ENCODE measurements at regions of chr5 and their contacts with region 1.

Region 1: GRCh38 chr5:170434966-170435605 is 45.9 kb upstream of the KCNMB1 start:
- DNase-seq: peak; percentile 51 to 85 (median 68)
- H3K4me3 ChIP-seq: no peak overlapping the region
- H3K27ac ChIP-seq: no peak overlapping the region
- H3K4me1 ChIP-seq: no peaks in the 10 kb centered on the region
- H3K27me3 ChIP-seq: no peaks in the 10 kb centered on the region
- CTCF ChIP-seq: peak; percentile 85 to 99 (median 97)
- POLR2A ChIP-seq: no peak

Region 2: DNA sequence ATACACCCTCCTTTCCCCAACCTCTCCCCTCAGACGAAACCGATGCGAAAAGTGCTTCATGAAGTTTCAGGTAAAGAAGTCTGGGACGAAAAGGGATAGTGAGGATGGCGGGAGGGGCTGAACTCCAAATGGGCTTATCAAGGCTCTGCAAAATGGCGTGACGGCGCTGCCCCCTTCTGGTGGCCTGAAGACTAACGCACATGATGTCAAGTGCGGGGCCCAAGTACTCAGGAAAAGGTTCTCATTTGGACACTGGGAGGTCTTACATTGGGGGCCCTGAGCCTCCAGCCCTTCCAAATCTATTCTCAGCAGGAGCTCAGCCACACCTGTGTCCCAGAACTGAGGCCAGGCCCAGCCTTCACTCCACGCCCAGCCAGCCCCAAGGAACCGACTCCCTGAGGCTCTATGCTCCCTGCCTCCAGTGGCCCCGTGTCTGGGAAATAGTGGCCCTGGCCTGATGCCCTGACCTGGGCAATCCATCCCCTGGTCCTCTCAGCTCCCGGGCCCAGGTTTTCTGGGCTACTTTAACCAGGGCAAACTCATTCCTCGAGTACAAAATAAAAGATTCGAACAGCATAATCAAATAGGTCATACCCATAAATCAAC is 188.6 kb after region 1 on chr5:
- intact Hi-C with region 1: loop called (anchors 5 kb)
- DNase-seq: peak; percentile 54 to 84 (median 74)
- H3K4me3 ChIP-seq: no peak overlapping the region
- H3K27ac ChIP-seq: no peak overlapping the region
- H3K4me1 ChIP-seq: no peaks in the 10 kb centered on the region
- H3K27me3 ChIP-seq: no peaks in the 10 kb centered on the region
- CTCF ChIP-seq: peak; percentile 49 to 88 (median 80)
- POLR2A ChIP-seq: no peak